HepG2 (cell line): ENCODE measurements at regions of chr7 and their contacts with region 1.

Region 1: DNA sequence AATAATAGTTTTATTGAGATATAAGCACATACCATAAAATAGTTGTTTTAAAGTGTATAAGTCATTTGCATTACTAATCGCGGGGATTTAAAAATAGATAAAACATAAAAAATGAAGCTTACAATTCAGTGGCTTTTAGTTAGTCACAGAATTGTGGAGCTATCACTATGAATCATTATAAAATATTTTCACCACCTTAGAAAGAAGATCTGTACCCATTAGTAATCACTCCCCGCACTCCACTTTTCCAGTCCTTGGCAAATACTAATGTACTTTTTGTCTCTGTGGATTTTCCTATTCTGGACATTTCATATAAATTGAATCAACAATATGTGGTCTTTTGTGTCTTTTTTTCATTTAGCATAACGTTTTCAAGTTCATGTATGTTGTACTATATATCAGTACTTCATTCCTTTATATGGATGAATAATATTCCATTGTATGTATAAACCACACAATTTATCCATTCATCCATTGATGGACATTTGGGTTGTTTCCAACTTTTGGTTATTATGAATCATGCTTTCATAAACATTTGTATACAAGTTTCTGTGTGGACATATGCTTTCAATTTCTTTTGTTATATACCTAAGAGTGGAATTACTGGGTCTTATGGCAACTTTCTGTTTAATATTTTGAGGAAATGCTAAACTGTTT is 162.5 kb downstream of the MAGI2 start:
- DNase-seq: no peak
- ATAC-seq: no peak
- H3K4me3 ChIP-seq: no peak overlapping the region
- H3K27ac ChIP-seq: no peak overlapping the region
- H3K4me1 ChIP-seq: peaks cover 13% of the 10 kb centered on the region
- H3K27me3 ChIP-seq: no peaks in the 10 kb centered on the region
- CTCF ChIP-seq: no peak
- EP300 ChIP-seq: no peak
- POLR2A ChIP-seq: no peak
- RAD21 ChIP-seq: no peak

Region 2: DNA sequence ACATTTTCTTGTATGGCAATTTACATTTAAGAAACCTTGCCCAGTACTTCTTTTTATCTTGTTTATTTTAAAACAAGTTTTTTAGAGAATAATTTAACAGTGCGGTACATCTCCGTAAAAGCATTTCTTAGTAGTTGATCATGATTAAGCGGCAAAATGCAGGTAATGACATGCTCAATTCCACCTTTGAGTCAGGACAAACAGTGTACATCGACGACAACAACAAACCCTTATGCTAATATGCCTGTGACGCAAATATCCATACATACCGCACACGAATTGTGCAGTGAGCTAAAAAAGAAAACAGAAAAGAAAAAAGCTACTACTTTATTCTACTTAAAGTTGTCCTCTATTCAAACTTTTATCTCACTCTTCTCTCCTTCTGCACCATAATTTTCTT is 160.6 kb after region 1 on chr7:
- CTCF ChIA-PET with region 1: no interaction called
- POLR2A ChIA-PET with region 1: no interaction called
- in situ Hi-C with region 1: no loop called
- intact Hi-C with region 1: no loop called
- DNase-seq: no peak
- ATAC-seq: no peak
- H3K4me3 ChIP-seq: peak overlapping the region; percentile 49 to 84 (median 82)
- H3K27ac ChIP-seq: peak overlapping the region; percentile 95
- H3K4me1 ChIP-seq: peaks cover 43% of the 10 kb centered on the region
- H3K27me3 ChIP-seq: no peaks in the 10 kb centered on the region; a peak in 1 of 5 replicates
- CTCF ChIP-seq: no peak
- EP300 ChIP-seq: no peak
- POLR2A ChIP-seq: no peak
- RAD21 ChIP-seq: no peak

Region 3: GRCh38 chr7:79461660-79462059 is 170.7 kb after region 1 on chr7:
- CTCF ChIA-PET with region 1: no interaction called
- POLR2A ChIA-PET with region 1: no interaction called
- in situ Hi-C with region 1: no loop called
- intact Hi-C with region 1: loop called (anchors 5 kb)
- DNase-seq: peak; percentile 88
- ATAC-seq: peak; percentile 89
- H3K4me3 ChIP-seq: no peak overlapping the region; a peak in 1 of 6 replicates
- H3K27ac ChIP-seq: peak overlapping the region; percentile 54
- H3K4me1 ChIP-seq: peaks cover 59% of the 10 kb centered on the region
- H3K27me3 ChIP-seq: no peaks in the 10 kb centered on the region
- CTCF ChIP-seq: no peak
- EP300 ChIP-seq: peak in 1 of 2 experiments; percentile 92; a peak in 2 of 4 replicates
- POLR2A ChIP-seq: no peak
- RAD21 ChIP-seq: no peak

Region 4: GRCh38 chr7:79709574-79710409 is 418.8 kb after region 1 on chr7:
- CTCF ChIA-PET with region 1: no interaction called
- POLR2A ChIA-PET with region 1: no interaction called
- in situ Hi-C with region 1: no loop called
- intact Hi-C with region 1: no loop called
- DNase-seq: no peak
- ATAC-seq: no peak
- H3K4me3 ChIP-seq: no peak overlapping the region
- H3K27ac ChIP-seq: no peak overlapping the region
- H3K4me1 ChIP-seq: no peaks in the 10 kb centered on the region
- H3K27me3 ChIP-seq: no peaks in the 10 kb centered on the region
- CTCF ChIP-seq: no peak
- EP300 ChIP-seq: no peak
- POLR2A ChIP-seq: no peak
- RAD21 ChIP-seq: no peak